Left ventricle myocardium inferior (tissue), 1 donor: ENCODE measurements at regions of chr10 and their contacts with region 1.

Region 1: DNA sequence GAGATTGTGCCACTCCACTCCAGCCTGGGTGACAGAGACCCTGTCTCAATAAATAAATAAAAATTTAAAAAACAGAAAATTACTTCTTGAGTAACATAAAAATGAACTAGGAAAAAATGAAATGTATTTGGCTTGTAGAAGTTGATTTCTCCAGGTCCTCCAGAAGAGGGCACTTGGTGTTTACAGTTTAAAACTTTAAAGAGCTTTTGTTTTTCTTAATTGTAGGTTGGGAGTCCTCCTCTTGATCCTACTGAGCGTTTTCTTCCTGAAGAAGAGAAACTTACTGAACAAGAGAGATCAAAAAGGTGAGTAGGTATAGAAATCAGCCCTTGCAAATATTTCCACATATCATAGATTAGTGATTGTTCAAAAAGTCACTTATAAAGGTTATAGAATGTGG is 16.2 kb downstream of the KIFBP start:
- DNase-seq: no peak
- H3K4me3 ChIP-seq: no peak overlapping the region
- H3K27ac ChIP-seq: no peak overlapping the region
- H3K4me1 ChIP-seq: peaks cover 3% of the 10 kb centered on the region
- H3K27me3 ChIP-seq: no peaks in the 10 kb centered on the region
- CTCF ChIP-seq: peak; percentile 62

Region 2: GRCh38 chr10:68897336-68897741 is 107.5 kb before region 1 on chr10:
- intact Hi-C with region 1: no loop called
- DNase-seq: no peak
- H3K4me3 ChIP-seq: no peak overlapping the region
- H3K27ac ChIP-seq: no peak overlapping the region
- H3K4me1 ChIP-seq: peaks cover 22% of the 10 kb centered on the region
- H3K27me3 ChIP-seq: no peaks in the 10 kb centered on the region
- CTCF ChIP-seq: peak; percentile 67

Region 3: DNA sequence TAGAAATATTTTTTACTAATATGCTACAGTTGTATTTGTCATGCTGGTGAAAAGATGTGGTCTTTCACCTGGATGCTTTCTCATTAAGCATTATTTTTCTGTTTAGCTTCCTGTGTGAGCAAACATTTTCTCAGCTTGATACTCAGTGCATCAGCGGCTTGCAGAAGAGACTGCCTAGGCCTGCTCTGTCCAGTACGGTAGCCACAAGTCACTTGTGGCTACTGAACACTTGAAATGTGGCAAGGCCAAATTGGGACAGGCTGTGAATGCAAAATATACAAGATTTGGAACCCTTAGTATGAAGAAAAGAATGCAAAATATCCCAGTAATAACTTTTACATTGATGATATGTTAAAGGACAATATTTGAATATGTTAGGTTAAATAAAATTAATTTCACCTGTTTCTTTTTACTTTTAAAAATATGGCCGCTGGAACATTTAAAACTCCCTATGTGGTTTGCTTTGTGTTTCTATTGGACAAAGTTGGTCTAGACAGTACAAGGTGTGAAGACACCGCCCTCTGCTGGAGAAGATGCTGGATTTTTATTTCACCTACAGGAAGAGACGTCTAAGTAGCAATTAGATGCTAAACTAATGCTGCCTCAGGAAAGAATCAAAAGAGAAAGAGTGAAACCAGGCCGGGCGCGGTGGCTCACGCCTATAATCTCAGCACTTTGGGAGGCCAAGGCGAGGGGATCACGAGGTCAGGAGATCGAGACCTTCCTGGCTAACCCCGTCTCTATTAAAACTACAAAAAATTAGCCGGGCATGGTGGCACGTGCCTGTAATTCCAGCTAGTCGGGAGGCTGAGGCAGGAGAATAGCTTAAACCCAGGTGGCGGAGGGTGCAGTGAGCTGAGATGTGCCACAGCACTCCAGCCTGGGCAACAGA is 88.4 kb after region 1 on chr10:
- intact Hi-C with region 1: loop called (anchors 5 kb)
- DNase-seq: peak; percentile 44
- H3K4me3 ChIP-seq: no peak overlapping the region
- H3K27ac ChIP-seq: peak overlapping the region; percentile 40
- H3K4me1 ChIP-seq: peaks cover 17% of the 10 kb centered on the region
- H3K27me3 ChIP-seq: no peaks in the 10 kb centered on the region
- CTCF ChIP-seq: peak; percentile 86